CD14-positive monocyte (primary cell): ENCODE measurements at regions of chr1 and their contacts with region 1.

Region 1: GRCh38 chr1:175035865-175036264 is 12.6 kb upstream of the MRPS14 start:
- DNase-seq: no peak
- H3K4me3 ChIP-seq: no peak overlapping the region
- H3K4me3 Mint-ChIP-seq: no peak overlapping the region
- H3K27ac ChIP-seq: no peak overlapping the region
- H3K27ac Mint-ChIP-seq: no peak overlapping the region
- H3K4me1 ChIP-seq: no peaks in the 10 kb centered on the region
- H3K4me1 Mint-ChIP-seq: peaks cover 14% of the 10 kb centered on the region
- H3K27me3 ChIP-seq: no peaks in the 10 kb centered on the region
- H3K27me3 Mint-ChIP-seq: peaks cover 0 to 3% (median 1%) of the 10 kb centered on the region in 3 donors
- CTCF ChIP-seq: no peak

Region 2: DNA sequence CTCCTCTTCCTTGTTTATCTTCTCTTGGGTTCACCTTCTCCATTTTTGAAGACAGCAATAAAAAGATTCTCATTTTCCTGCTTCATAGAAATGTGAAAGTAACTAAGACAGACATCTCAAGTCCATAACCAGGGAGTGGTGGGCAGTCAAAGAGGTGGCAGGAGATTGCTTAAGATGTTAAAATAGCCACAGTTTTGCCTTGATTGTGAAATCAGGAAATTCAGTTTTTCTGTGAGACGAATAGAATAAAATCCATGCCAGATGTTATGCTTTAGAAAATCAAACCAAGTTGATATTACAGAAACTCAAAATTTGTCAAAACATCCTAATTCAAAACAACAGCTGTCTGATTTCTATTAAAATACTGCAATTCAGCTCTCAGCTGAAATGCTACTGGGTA is 89.0 kb after region 1 on chr1:
- intact Hi-C with region 1: loop called (anchors 5 kb)
- DNase-seq: peak; percentile 15 to 48 (median 34)
- H3K4me3 ChIP-seq: peak overlapping the region; percentile 2 to 76 (median 55)
- H3K4me3 Mint-ChIP-seq: peak overlapping the region; percentile 65 to 89
- H3K27ac ChIP-seq: peak overlapping the region; percentile 11 to 79
- H3K27ac Mint-ChIP-seq: peak overlapping the region; percentile 84 to 94 (median 90)
- H3K4me1 ChIP-seq: peaks cover 48 to 56% of the 10 kb centered on the region in 2 donors
- H3K4me1 Mint-ChIP-seq: peaks cover 52% of the 10 kb centered on the region
- H3K27me3 ChIP-seq: no peaks in the 10 kb centered on the region
- H3K27me3 Mint-ChIP-seq: peaks cover 0 to 2% (median 0%) of the 10 kb centered on the region in 3 donors
- CTCF ChIP-seq: no peak

Region 3: DNA sequence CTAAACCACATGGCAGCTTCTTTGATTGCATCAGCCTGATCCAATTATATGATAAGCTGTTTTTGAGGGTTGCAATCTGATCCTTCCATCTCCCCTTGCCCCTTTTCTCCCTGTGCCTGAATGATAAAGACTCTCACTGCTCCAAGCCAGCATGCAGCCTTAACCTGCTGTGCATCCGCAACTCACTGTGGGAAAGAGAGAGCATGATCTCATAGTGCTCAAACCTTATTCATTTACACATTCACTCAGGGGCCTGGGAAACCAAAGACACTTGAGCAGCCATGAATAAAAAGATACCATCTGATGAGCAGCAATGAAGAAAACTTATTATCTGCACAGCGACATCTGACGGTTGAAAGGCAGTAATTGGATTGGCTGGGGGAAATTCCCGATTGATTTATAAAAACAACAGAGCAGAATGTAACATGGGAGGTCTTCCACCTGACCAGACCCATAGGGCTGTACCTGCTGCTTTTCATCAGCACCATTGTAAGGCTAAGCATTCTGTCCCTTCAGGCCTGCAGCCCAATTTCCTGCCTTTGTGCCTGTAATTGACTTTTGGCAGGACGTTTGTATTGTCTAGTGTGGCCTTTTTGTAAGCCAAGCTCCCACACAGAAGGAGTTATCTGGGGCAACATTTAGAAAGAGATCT is 94.3 kb after region 1 on chr1:
- intact Hi-C with region 1: loop called in 1 of 2 experiments (anchors 5 kb)
- DNase-seq: no peak
- H3K4me3 ChIP-seq: no peak overlapping the region
- H3K4me3 Mint-ChIP-seq: no peak overlapping the region
- H3K27ac ChIP-seq: no peak overlapping the region
- H3K27ac Mint-ChIP-seq: peak overlapping the region in 1 of 7 donors; percentile 69
- H3K4me1 ChIP-seq: peaks cover 31 to 39% of the 10 kb centered on the region in 2 donors
- H3K4me1 Mint-ChIP-seq: peaks cover 38% of the 10 kb centered on the region
- H3K27me3 ChIP-seq: no peaks in the 10 kb centered on the region
- H3K27me3 Mint-ChIP-seq: peaks cover 0 to 1% (median 0%) of the 10 kb centered on the region in 3 donors
- CTCF ChIP-seq: no peak

Region 4: DNA sequence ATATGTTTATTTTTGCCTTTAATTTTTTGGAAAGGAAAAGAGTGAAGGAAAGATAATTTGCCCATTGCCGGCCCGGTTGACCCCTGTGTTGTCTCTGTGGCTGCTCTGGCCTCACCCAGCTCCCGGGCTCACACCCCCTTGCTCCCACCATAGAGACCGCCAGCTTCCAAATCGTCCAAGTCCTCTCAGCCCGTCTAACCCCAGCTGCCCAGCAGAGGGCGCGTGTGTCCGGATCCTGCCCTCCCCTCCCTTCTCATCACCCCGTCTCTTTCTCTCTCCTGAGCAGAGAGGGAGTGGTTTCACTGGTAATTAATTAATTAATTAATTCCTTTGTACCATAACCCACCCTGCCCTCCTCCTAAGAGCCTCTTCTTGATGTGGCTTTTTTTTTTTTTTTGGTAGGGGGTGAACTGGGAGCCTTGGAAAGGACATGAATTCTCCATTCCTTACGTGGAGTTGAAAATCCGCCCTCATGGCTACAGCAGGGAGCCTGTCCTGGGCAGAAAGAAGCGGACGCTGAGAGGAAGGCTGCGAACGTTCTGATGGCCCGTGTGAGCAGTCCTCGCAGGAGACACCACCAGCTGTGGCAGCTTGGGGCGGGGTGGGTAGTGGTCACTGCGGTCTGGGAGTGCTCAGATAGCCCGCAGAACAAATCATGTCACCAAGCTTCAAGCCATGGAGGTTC is 110.8 kb after region 1 on chr1:
- intact Hi-C with region 1: loop called in 1 of 2 experiments (anchors 5 kb)
- DNase-seq: peak; percentile 52 to 57 (median 55)
- H3K4me3 ChIP-seq: no peak overlapping the region
- H3K4me3 Mint-ChIP-seq: peak overlapping the region in 1 of 2 donors; percentile 54
- H3K27ac ChIP-seq: no peak overlapping the region
- H3K27ac Mint-ChIP-seq: no peak overlapping the region
- H3K4me1 ChIP-seq: peaks cover 0 to 4% of the 10 kb centered on the region in 2 donors
- H3K4me1 Mint-ChIP-seq: peaks cover 11% of the 10 kb centered on the region
- H3K27me3 ChIP-seq: no peaks in the 10 kb centered on the region
- H3K27me3 Mint-ChIP-seq: peaks cover 7 to 11% (median 8%) of the 10 kb centered on the region in 3 donors
- CTCF ChIP-seq: peak; percentile 82

Region 5: DNA sequence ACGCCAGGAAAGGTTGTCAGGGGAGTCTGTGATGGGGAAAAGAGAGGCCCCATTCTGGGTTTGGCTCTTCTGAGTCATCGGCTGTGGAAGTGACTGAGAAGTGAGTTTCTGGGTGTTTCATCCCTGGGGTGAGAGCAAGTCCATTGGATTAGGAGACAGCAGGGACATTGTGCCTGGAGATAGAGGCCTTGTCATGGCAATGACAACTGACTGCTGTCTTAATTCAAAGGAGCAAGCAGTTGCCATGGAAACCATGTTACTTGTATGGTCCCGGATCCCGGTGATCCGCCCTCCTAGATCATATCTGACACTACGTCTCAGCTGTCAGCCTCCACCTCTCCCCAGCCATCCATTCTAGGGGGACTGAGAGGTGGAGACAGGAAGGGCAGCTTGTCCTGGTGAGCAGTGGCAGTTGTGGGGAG is 122.3 kb after region 1 on chr1:
- intact Hi-C with region 1: no loop called
- DNase-seq: no peak
- H3K4me3 ChIP-seq: no peak overlapping the region
- H3K4me3 Mint-ChIP-seq: no peak overlapping the region
- H3K27ac ChIP-seq: no peak overlapping the region
- H3K27ac Mint-ChIP-seq: no peak overlapping the region
- H3K4me1 ChIP-seq: peaks cover 0 to 3% of the 10 kb centered on the region in 2 donors
- H3K4me1 Mint-ChIP-seq: peaks cover 5% of the 10 kb centered on the region
- H3K27me3 ChIP-seq: no peaks in the 10 kb centered on the region
- H3K27me3 Mint-ChIP-seq: peaks cover 3 to 14% (median 6%) of the 10 kb centered on the region in 3 donors
- CTCF ChIP-seq: no peak

Region 6: DNA sequence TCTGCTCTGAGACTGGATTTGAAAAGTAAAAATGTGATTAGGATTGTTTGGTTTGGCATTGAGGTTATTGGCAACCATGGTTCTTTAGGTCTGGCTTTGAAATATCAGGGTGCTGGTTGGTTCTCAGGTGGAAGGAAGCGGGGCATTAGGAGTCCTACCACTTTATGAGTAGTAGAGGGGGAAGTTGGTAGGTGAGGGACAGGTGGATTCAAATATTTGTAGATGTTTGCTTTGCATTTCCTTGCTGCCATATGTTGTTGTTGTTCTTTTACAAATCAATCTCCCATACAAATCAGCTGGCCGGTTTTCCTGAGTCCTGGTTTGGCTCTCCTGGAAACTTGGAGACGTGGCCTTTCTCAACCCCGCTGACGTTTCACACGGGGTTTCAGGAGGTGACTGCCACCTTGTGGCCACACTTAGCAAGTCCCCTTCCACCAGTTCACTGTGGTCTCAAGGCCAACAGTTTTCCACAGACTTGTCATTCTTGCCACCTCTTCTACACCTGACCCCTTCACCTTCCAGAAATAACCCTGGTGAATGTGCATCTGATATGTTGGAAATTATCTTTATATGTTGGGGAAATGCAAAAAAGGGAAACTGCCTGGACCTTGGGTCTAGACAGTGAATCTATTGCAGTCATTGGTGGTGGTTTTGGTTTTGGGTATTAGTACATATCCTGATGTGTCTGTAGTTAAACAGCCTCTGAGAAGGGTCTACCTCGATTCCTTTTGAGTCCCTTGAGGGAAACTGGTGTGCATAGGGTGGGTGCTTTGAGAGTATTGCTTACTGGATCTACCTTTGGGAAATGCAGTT is 283.8 kb after region 1 on chr1:
- intact Hi-C with region 1: loop called (anchors 10 kb)
- DNase-seq: peak; percentile 47 to 67 (median 63)
- H3K4me3 ChIP-seq: no peak overlapping the region
- H3K4me3 Mint-ChIP-seq: peak overlapping the region in 1 of 2 donors; percentile 36
- H3K27ac ChIP-seq: no peak overlapping the region
- H3K27ac Mint-ChIP-seq: no peak overlapping the region
- H3K4me1 ChIP-seq: peaks cover 4 to 6% of the 10 kb centered on the region in 2 donors
- H3K4me1 Mint-ChIP-seq: peaks cover 9% of the 10 kb centered on the region
- H3K27me3 ChIP-seq: no peaks in the 10 kb centered on the region
- H3K27me3 Mint-ChIP-seq: peaks cover 0 to 3% (median 2%) of the 10 kb centered on the region in 3 donors
- CTCF ChIP-seq: peak; percentile 87